ENCODE measurements at regions of chr6 and their contacts with region 1.

Region 1: GRCh38 chr6:111709615-111710398 is 104.1 kb upstream of the TRAF3IP2 start:
- DNase-seq: peak; percentile 89
- H3K27ac ChIP-seq: no peak overlapping the region
- CTCF ChIP-seq: peak; percentile 75

Region 2: DNA sequence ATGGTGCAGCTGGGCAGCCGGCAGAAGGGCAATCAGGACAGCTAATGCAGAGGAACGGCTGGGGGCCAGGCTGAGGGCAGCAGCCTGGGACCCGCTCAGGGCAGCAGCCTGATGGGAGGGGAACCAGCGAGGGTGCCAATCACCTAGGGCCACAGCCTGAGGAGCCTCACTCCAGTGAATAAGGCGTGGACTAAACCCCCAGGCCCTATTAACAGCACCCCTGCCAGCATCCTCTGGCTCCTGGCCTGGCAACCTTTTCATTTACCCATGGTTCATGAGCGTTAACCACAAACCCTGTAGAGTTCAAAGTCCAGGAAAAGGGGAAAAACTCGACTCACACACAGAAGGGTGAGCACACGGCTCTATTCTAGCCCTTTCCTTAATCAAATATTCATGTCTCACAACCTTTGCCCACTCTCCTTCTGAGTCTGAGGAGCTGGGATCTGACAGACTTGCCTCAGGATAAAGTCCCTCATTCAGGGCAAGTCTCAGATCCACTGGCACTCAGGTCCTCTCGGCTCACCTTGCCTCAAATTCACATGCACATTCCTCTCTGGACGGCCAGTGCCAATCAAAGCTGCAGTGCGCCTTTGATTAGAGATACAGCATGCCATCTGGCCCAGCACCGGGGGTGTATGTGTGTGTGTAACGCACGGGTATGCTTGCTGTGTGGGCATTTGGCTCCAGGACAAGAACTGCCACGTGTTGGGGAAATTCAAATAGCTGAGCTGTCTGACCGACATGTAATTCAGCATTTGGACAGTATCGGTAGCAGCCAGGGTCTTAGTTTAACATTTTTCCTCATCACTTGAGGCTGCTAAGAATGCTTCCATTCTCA is 17.3 kb before region 1 on chr6:
- CTCF ChIA-PET with region 1: no interaction called
- POLR2A ChIA-PET with region 1: no interaction called
- DNase-seq: no peak
- H3K27ac ChIP-seq: no peak overlapping the region
- CTCF ChIP-seq: no peak

Region 3: DNA sequence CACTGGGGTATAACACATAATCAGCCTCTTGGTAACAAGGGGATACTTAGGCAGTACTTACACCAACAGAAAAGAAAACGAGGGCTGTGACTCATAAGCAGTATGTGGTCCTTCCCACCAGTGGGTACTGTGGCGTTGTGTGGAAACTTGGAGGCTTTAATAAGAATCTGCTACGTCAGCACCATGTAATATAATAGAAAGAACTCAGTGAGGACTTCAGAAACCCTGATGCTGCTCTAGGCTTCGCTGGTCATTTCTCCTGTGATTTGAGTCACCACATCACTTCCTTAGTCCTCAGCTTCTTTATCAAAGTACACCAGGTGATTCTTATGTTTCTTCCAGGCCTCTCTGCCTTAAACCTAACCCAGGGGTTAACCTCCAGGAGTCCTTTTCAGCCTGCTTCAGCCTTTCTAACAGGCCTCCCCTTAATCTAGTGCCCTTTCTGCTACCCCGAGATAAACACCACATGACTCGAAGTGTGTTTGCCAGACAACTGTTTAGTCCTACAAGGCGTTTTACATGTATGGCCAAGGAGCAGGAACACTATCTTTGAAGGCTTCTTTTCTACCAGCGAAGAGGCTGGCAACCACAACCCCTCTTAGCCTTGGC is 94.9 kb after region 1 on chr6:
- CTCF ChIA-PET with region 1: no interaction called
- POLR2A ChIA-PET with region 1: no interaction called
- DNase-seq: no peak
- H3K27ac ChIP-seq: no peak overlapping the region
- CTCF ChIP-seq: no peak

Region 4: GRCh38 chr6:111873178-111874024 is 163.6 kb after region 1 on chr6 and contains the start of gene FYN:
- CTCF ChIA-PET with region 1: no interaction called
- POLR2A ChIA-PET with region 1: no interaction called
- DNase-seq: peak; percentile 99
- H3K27ac ChIP-seq: no peak within 1 kb of the TSS
- CTCF ChIP-seq: 0 out of 2 replicates have a peak, but pooled peaks have one; percentile 27

Region 5: GRCh38 chr6:112043032-112044007 is 333.5 kb after region 1 on chr6:
- CTCF ChIA-PET with region 1: interaction called, 21 read pairs
- POLR2A ChIA-PET with region 1: no interaction called
- DNase-seq: peak; percentile 88
- H3K27ac ChIP-seq: peak overlapping the region; percentile 68
- CTCF ChIP-seq: peak; percentile 85